ENCODE measurements at regions of chr14 and their contacts with region 1.

Region 1: GRCh38 chr14:32417956-32418552 is 89.0 kb downstream of the AKAP6 start:
- DNase-seq: peak; percentile 51
- ATAC-seq: peak in 1 of 2 donors; percentile 61

Region 2: GRCh38 chr14:32457213-32457920 is 39.3 kb after region 1 on chr14:
- intact Hi-C with region 1: loop called in 1 of 2 experiments (anchors 5 kb)
- DNase-seq: peak; percentile 63
- ATAC-seq: peak; percentile 99